HepG2 (cell line): ENCODE measurements at regions of chr14 and their contacts with region 1.

Region 1: GRCh38 chr14:71720978-71721624 is 211.1 kb upstream of the RGS6 start:
- DNase-seq: peak; percentile 53
- ATAC-seq: peak; percentile 89
- H3K4me3 ChIP-seq: no peak overlapping the region
- H3K27ac ChIP-seq: no peak overlapping the region
- H3K4me1 ChIP-seq: no peaks in the 10 kb centered on the region
- H3K27me3 ChIP-seq: no peaks in the 10 kb centered on the region
- CTCF ChIP-seq: peak; percentile 80
- EP300 ChIP-seq: no peak
- POLR2A ChIP-seq: no peak
- RAD21 ChIP-seq: peak; percentile 53; the same call in 1 of the 2 replicates

Region 2: DNA sequence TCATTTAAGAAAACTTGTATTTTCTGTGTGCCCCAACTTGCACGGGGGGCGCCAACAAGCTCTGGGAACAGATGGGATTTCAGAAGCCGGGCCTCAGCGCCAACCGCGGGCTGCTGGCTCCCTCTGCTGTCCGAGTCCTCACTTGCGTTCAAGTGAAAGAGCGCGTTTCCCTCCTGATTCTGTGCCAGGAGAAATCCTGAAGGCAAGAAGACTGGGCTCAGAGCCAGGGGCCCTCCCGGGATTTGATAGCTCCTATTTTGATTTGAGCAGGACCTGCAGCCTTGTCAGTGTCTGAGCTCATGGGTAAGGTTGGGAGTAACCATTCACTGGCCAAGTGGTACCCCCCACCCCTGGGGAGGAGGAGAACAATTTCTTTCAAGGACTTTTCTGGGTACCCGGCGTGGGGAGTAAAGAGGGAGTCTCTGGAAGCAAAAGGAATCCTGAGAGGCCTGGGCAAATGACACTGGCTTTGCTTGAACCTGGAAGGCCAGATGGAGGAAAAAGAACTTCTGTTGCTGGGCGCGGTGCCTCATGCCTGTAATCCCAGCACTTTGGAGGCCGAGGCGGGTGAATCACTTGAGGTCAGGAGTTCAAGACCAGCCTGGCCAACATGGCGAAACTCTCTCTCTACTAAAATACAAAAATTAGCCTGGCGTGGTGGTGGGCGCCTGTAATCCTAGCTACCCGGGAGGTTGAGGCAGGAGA is 32.2 kb after region 1 on chr14:
- CTCF ChIA-PET with region 1: interaction called, 12 read pairs
- POLR2A ChIA-PET with region 1: no interaction called
- in situ Hi-C with region 1: no loop called
- intact Hi-C with region 1: loop called (anchors 2 kb)
- DNase-seq: peak; percentile 62
- ATAC-seq: peak; percentile 89
- H3K4me3 ChIP-seq: no peak overlapping the region
- H3K27ac ChIP-seq: no peak overlapping the region
- H3K4me1 ChIP-seq: no peaks in the 10 kb centered on the region; the same call in 1 of the 2 replicates
- H3K27me3 ChIP-seq: peaks cover 0 to 5% of the 10 kb centered on the region in 2 experiments; a peak in 1 of 5 replicates
- CTCF ChIP-seq: peak; percentile 93
- EP300 ChIP-seq: no peak
- POLR2A ChIP-seq: no peak
- RAD21 ChIP-seq: peak; percentile 96

Region 3: DNA sequence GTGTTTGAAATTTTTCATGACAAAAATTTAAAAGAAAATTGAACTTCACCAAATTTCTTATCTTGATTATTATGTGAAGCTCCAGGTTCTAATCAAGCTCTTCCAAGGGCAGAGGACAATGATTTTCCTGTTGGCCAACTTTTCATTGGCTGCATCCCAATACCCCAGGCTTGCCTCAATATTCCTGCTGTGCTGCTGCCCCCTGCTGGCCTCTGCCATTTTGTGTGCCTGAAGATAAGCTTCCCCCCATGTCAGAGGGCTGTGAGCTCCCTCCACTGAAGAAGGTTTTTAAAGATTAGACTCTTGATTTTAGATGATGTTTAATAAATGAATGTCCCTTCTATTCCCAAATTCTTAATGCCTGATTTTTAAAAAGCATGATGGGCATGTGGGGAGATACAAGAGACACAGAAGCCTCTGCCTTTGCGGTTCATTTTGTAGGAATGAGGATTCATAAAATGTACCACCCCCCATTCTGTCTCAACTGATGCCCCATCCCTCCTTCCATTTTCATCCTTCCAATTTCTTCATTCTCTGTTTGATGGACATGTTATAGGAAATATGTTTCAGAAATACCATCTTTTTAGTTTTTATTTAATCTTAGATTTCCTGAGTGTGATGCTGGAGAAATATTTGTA is 134.4 kb after region 1 on chr14:
- CTCF ChIA-PET with region 1: no interaction called
- POLR2A ChIA-PET with region 1: no interaction called
- in situ Hi-C with region 1: loop called (anchors 10 kb)
- intact Hi-C with region 1: loop called (anchors 5 kb)
- DNase-seq: peak; percentile 49
- ATAC-seq: peak; percentile 91
- H3K4me3 ChIP-seq: no peak overlapping the region
- H3K27ac ChIP-seq: no peak overlapping the region
- H3K4me1 ChIP-seq: no peaks in the 10 kb centered on the region
- H3K27me3 ChIP-seq: no peaks in the 10 kb centered on the region
- CTCF ChIP-seq: peak; percentile 71
- EP300 ChIP-seq: no peak
- POLR2A ChIP-seq: no peak
- RAD21 ChIP-seq: no peak